ENCODE measurements at regions of chrX and their contacts with region 1.

Region 1: GRCh38 chrX:12567857-12568256 is 223.4 kb upstream of the PRPS2 start:
- DNase-seq: no peak
- H3K4me3 ChIP-seq: no peak overlapping the region
- H3K27ac ChIP-seq: no peak overlapping the region
- H3K4me1 ChIP-seq: no peaks in the 10 kb centered on the region
- H3K27me3 ChIP-seq: no peaks in the 10 kb centered on the region
- CTCF ChIP-seq: no peak
- EP300 ChIP-seq: no peak
- POLR2A ChIP-seq: no peak

Region 2: DNA sequence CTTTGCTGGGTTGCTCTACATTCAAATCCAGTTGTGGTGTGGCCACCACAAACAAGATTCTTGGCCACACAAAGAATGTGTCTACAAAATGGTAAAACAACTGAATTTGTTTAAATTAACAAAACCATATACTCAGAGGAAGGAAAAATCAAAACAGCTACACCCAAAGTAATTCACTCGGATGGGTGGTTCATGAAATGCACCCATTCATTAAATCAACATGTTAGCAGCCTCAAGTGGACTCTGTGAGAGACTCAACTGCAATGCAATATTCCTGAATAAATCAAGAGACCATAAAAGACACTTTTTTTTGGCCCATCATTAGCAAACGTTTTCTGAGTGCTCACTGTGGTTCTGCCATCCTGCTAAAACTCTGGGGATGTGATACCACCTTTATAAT is 1285.8 kb before region 1 on chrX:
- intact Hi-C with region 1: loop called in 1 of 4 experiments (anchors 5 kb)
- DNase-seq: no peak
- H3K4me3 ChIP-seq: no peak overlapping the region
- H3K27ac ChIP-seq: no peak overlapping the region
- H3K4me1 ChIP-seq: no peaks in the 10 kb centered on the region
- H3K27me3 ChIP-seq: no peaks in the 10 kb centered on the region
- CTCF ChIP-seq: no peak
- EP300 ChIP-seq: no peak
- POLR2A ChIP-seq: no peak

Measured in ovary (tissue), 10 donors.